Activated naive CD4-positive, alpha-beta T cell treated with anti-CD3 and anti-CD28 coated beads for 36 hours (primary cell): ENCODE measurements at regions of chr12 and their contacts with region 1.

Region 1: DNA sequence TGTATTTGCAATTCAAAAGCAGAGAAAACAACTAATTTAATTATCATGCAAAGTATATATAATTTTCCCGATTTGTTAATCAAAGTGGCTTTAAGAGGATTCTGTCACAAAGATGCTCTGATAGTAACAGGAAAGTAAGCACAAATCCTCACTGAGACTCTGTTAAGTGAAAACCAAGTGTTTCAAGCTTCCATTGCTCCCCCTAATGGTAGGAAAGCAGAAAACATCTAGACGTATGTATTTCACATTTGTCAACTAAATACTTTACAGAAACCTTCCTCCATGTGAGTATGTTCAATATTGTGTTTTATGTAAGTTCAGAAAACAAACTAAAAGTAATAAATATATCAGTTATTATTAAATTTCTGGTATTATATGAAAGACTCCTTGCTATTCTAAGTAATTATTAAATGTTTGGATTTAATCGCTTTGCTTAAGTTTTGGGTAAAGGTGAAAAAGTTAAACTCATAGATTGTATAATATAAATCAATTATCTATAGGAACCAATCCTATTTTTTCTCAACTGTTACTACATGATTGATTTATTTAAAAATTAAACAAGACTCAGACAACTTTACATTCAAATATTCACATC is 1.5 kb upstream of the NTS start:
- DNase-seq: no peak
- H3K4me3 Mint-ChIP-seq: no peak overlapping the region
- H3K27ac Mint-ChIP-seq: no peak overlapping the region
- H3K4me1 Mint-ChIP-seq: no peaks in the 10 kb centered on the region
- H3K27me3 Mint-ChIP-seq: peaks cover 2% of the 10 kb centered on the region

Region 2: DNA sequence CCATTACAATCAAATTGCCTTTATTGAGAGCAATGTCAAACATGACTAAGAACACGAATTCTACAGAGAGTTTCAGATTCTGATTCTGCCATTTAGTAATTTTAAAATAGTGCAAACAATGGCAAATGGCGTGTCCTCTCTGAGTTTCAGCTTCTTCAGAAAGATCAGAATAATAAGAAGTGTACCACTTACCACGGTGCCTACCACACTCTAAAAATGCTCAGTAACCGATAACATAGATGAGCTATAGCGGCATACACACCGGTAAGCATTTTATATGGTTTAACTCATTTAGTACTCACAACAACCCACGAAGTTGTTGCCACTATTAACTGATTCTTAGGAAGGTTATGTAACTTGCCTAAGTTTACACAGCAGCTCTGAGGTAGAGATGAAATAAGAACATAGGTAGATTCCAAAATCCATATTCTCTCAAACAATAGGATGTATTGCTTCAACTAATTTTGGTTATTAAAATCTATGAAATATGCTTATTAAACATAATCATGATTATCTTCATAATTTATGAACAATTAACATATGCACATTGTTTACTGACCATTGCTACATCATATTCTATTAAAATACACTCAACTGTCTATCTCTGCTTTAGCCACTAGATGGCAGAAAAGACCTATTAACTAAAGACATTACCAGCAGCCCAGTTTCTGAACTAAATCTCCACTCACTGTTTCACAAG is 998.3 kb before region 1 on chr12:
- CTCF ChIA-PET with region 1: no interaction called
- intact Hi-C with region 1: loop called (anchors 2 kb)
- DNase-seq: no peak
- H3K4me3 Mint-ChIP-seq: no peak overlapping the region
- H3K27ac Mint-ChIP-seq: no peak overlapping the region
- H3K4me1 Mint-ChIP-seq: no peaks in the 10 kb centered on the region
- H3K27me3 Mint-ChIP-seq: no peaks in the 10 kb centered on the region

Region 3: DNA sequence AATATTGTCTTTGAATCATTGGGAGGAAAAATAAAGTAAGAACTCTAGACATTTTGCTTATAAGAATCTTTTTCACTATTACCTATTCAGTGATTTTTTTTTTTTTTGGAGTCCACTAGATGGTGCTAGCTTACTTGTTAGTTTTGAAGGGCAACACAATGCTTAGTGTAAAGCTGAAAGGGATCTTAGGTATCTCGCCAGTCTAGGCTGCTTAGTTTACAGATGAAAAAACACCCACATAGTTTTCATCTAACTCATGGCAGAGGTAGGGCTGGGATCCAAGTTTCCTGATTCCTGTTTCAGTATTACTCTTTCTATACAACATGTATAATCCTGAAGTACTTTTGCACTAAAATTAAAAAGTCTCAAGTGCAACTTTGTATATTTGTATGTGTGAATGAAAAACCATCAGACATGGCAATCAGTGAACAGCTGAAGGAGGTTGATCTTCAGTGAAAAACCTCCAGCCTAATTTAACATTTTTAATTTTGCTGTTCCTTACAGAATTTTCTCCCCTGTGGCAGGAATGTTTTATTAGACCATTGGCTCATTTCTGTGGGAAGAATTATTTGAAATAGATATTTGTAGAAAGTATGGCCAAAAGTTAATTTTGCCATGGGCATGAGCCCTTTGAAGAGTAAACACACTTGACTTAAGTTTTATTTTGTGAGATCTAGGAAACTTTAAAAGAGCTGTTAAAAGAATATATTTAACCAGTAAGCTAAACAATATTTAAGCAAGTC is 795.7 kb before region 1 on chr12:
- CTCF ChIA-PET with region 1: interaction called, 3 read pairs
- intact Hi-C with region 1: loop called (anchors 2 kb)
- DNase-seq: no peak
- H3K4me3 Mint-ChIP-seq: no peak overlapping the region
- H3K27ac Mint-ChIP-seq: no peak overlapping the region
- H3K4me1 Mint-ChIP-seq: no peaks in the 10 kb centered on the region
- H3K27me3 Mint-ChIP-seq: no peaks in the 10 kb centered on the region

Region 4: DNA sequence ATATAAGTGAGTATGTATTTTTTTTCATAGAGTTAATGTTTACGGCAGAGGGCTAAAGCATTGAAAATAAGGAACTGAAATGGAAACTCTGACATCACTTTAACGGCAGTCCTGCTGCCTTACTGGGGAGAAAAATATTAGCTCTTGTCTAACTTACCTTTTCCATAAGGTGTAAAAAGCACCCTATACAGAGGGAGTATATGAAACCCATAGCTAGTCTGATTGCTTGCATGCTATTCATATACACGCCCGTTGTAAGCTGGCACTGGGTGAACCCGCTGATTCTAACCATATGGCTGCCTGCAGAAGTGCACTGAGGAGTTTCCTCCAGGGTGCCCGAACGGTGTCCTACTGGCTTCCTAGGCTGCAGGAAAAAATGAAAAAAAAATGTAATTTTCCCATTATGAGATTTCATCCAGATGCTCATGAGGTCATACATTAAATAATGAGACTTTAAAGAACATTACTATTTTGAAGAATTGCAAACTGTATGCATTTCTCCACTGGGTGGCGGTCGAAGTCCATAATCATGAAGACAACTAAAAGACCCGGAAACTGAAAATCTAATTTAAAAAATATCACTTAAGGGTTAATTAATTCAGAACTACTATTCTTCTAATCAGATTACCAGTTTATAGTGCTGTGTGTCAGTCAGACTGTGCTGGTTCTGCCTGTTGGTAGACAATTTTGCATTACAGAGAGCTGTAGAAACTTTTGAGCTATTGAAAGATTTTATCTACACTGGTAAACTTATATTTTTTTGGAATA is 447.8 kb before region 1 on chr12:
- CTCF ChIA-PET with region 1: interaction called, 4 read pairs
- intact Hi-C with region 1: loop called (anchors 1 kb)
- DNase-seq: peak; percentile 50
- H3K4me3 Mint-ChIP-seq: no peak overlapping the region
- H3K27ac Mint-ChIP-seq: no peak overlapping the region
- H3K4me1 Mint-ChIP-seq: no peaks in the 10 kb centered on the region
- H3K27me3 Mint-ChIP-seq: no peaks in the 10 kb centered on the region

Region 5: GRCh38 chr12:85468356-85469157 is 404.0 kb before region 1 on chr12:
- CTCF ChIA-PET with region 1: interaction called, 6 read pairs
- intact Hi-C with region 1: loop called (anchors 1 kb)
- DNase-seq: peak; percentile 64
- H3K4me3 Mint-ChIP-seq: peak overlapping the region; percentile 72
- H3K27ac Mint-ChIP-seq: no peak overlapping the region
- H3K4me1 Mint-ChIP-seq: peaks cover 11% of the 10 kb centered on the region
- H3K27me3 Mint-ChIP-seq: peaks cover 11% of the 10 kb centered on the region

Region 6: GRCh38 chr12:85894653-85895052 is 22.1 kb after region 1 on chr12:
- CTCF ChIA-PET with region 1: no interaction called
- intact Hi-C with region 1: no loop called
- DNase-seq: no peak
- H3K4me3 Mint-ChIP-seq: no peak overlapping the region
- H3K27ac Mint-ChIP-seq: no peak overlapping the region
- H3K4me1 Mint-ChIP-seq: no peaks in the 10 kb centered on the region
- H3K27me3 Mint-ChIP-seq: no peaks in the 10 kb centered on the region